ENCODE measurements at regions of chr6 and their contacts with region 1.

Region 1: GRCh38 chr6:111642463-111643158 is 36.9 kb upstream of the TRAF3IP2 start:
- DNase-seq: peak; percentile 71 to 91 (median 78)
- H3K4me3 ChIP-seq: no peak overlapping the region
- H3K27ac ChIP-seq: no peak overlapping the region
- H3K4me1 ChIP-seq: peaks cover 0 to 4% of the 10 kb centered on the region in 2 donors
- H3K27me3 ChIP-seq: no peaks in the 10 kb centered on the region
- CTCF ChIP-seq: peak; percentile 51 to 86 (median 74)
- POLR2A ChIP-seq: no peak

Region 2: GRCh38 chr6:111259089-111259831 is 383.4 kb before region 1 on chr6:
- intact Hi-C with region 1: loop called in 1 of 2 experiments (anchors 5 kb)
- DNase-seq: peak; percentile 98 to 100 (median 99)
- H3K4me3 ChIP-seq: peak overlapping the region; percentile 24 to 86 (median 68)
- H3K27ac ChIP-seq: peak overlapping the region; percentile 68 to 94 (median 89)
- H3K4me1 ChIP-seq: peaks cover 0 to 37% of the 10 kb centered on the region in 2 donors
- H3K27me3 ChIP-seq: no peaks in the 10 kb centered on the region
- CTCF ChIP-seq: peak; percentile 93 to 99 (median 98)
- POLR2A ChIP-seq: peak; percentile 34 to 85

Region 3: DNA sequence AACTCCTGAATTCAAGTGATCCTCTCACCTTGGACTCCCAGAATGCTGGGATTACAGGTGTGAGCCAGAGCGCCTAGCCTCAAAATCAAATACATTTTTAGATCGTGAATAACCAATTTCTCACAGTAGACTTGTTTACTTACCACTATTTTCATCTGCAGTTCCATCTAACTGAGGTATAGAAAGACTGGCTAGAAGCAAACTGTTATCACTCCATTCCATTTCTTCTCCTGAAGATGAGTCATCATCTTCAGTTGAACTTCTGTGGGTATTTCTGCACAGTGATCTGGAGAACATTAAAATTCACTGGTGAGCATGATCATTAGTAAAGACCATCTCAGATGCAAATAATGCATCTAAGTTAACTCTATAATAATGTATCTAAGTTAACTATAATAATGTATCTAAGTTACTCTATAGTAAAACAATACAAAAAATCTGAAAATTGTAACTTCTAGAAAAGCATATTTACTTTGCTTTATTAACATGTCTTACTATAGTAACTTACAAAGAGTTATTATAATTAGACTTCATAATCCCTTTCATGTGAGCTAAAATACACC is 265.0 kb before region 1 on chr6:
- intact Hi-C with region 1: loop called in 1 of 2 experiments (anchors 10 kb)
- DNase-seq: no peak
- H3K4me3 ChIP-seq: no peak overlapping the region
- H3K27ac ChIP-seq: no peak overlapping the region
- H3K4me1 ChIP-seq: no peaks in the 10 kb centered on the region
- H3K27me3 ChIP-seq: no peaks in the 10 kb centered on the region
- CTCF ChIP-seq: no peak
- POLR2A ChIP-seq: no peak